ENCODE measurements at regions of chr5 and their contacts with region 1.

Region 1: DNA sequence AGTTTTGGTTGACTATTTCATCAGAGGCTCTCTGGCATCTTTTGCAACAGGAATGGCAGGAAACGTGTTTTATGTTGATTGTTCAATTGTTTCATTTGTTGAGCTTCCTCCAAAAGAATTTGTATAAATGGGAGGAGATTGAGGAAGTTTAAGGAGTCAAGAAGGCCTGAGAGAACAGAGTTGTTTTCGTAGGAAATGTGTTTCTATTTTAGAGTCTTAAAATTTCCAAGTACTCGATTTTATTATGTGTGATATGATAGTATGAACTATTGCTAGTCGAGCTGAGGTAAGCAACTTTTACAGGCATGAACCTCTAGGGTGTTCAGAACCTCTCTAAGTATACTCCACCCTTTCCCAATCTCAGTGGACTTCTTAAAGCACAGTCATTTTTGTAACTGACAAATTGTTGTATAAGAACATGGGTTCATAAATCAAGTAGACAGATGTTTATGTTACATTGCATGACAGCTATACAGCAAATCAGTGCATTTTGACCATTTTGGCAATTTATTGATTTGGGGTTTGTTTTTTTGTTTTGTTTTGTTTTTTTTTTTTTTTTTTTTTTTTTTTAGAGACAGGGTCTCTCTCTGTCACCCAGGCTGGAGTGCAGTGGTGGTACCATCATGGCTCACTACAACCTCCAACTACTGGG is 47.4 kb downstream of the POLK start:
- DNase-seq: no peak
- H3K4me3 ChIP-seq: no peak overlapping the region
- H3K27ac ChIP-seq: peak overlapping the region in 1 of 4 donors; percentile 2
- H3K4me1 ChIP-seq: no peaks in the 10 kb centered on the region
- H3K27me3 ChIP-seq: no peaks in the 10 kb centered on the region
- CTCF ChIP-seq: no peak
- EP300 ChIP-seq: no peak
- POLR2A ChIP-seq: no peak

Region 2: GRCh38 chr5:75532190-75532589 is 26.9 kb before region 1 on chr5:
- in situ Hi-C with region 1: no loop called
- intact Hi-C with region 1: loop called (anchors 1 kb)
- DNase-seq: no peak
- H3K4me3 ChIP-seq: no peak overlapping the region
- H3K27ac ChIP-seq: no peak overlapping the region
- H3K4me1 ChIP-seq: peaks cover 0 to 5% (median 2%) of the 10 kb centered on the region in 4 donors
- H3K27me3 ChIP-seq: no peaks in the 10 kb centered on the region
- CTCF ChIP-seq: no peak
- EP300 ChIP-seq: no peak
- POLR2A ChIP-seq: no peak

Measured in transverse colon (tissue), 4 donors.